MCF 10A (cell line): ENCODE measurements at regions of chr3 and their contacts with region 1.

Region 1: DNA sequence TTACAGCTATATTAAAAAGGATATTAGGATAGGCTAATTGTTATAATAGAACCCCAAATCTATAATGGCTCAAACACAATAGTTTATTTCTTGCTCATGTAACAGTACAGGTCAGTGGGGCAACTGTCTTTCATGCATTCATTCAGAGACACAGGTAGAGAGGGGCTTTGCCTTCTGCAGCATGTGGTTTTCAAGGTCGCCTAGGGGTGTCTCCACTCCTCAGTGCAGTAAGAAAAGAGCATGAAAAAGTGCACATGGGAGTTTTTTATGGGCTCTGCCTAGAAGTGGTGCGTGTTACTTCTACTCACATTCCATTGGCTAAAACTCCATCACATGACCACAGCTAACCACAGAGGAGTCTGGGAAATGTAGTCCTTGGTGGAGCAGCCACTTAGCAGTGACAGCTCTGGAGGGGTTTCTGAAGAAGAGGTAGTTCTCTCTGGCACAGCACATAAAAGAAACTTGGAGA is 1.8 kb downstream of the ZBTB38 start:
- DNase-seq: peak; percentile 93
- H3K4me3 Mint-ChIP-seq: peak overlapping the region; percentile 73
- H3K27ac Mint-ChIP-seq: peak overlapping the region; percentile 98
- H3K4me1 Mint-ChIP-seq: peaks cover 56% of the 10 kb centered on the region
- H3K27me3 Mint-ChIP-seq: no peaks in the 10 kb centered on the region
- CTCF ChIP-seq: no peak

Region 2: DNA sequence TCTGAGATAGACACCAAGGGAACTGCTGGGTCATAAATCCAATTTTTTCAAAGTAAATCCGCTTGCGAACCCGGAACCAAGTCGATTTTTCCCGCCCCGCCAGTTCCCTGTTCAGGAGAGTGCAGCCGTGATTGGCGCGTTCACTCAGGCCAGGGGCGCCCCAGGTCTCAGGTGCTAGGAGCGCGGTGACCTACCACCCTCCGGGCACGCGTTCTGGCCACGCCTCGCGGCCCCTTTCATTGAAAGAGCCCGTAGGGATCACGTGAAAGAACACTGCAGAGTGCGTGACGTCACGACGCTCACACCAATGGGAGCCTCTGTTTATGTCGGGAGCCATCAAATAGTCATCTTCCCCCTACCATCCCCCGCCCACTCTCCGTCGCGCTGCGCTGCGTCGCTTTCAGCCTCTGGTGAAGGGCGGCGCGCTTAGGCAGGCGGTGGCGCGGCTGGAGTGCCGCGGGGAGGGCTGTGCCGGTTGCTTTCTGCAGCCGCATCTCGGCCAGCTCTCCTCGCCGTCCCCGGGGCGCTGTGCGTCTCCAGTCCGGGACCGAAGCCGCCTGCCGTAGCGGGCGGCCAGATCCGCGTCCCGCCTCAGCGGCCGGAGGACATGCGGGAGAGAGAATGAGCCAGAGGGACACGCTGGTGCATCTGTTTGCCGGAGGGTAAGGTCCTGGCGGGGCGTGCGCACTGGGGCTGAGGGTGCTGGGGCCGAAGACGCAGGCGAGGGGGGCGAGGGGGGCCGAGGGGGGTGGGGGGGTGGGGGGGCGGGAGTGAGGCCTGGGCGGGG is 428.5 kb before region 1 on chr3 and contains the start of gene SLC25A36:
- CTCF ChIA-PET with region 1: no interaction called
- POLR2A ChIA-PET with region 1: no interaction called
- intact Hi-C with region 1: loop called (anchors 5 kb)
- DNase-seq: peak; percentile 99
- H3K4me3 Mint-ChIP-seq: peak within 1 kb of the TSS; percentile 95
- H3K27ac Mint-ChIP-seq: peak within 1 kb of the TSS; percentile 89
- H3K4me1 Mint-ChIP-seq: peaks cover 22% of the 10 kb centered on the region
- H3K27me3 Mint-ChIP-seq: no peaks in the 10 kb centered on the region
- CTCF ChIP-seq: no peak
- total RNA-seq, gene SLC25A36: 71.2 and 75.0 TPM in 2 replicates

Region 3: GRCh38 chr3:141386611-141387111 is 16.6 kb after region 1 on chr3:
- CTCF ChIA-PET with region 1: interaction called, 7 read pairs
- POLR2A ChIA-PET with region 1: interaction called, 210 read pairs
- intact Hi-C with region 1: loop called (anchors 2 kb)
- DNase-seq: no peak
- H3K4me3 Mint-ChIP-seq: peak overlapping the region; percentile 28
- H3K27ac Mint-ChIP-seq: peak overlapping the region; percentile 73
- H3K4me1 Mint-ChIP-seq: peaks cover 46% of the 10 kb centered on the region
- H3K27me3 Mint-ChIP-seq: no peaks in the 10 kb centered on the region
- CTCF ChIP-seq: no peak

Region 4: GRCh38 chr3:141402476-141403171 is 32.5 kb after region 1 on chr3:
- CTCF ChIA-PET with region 1: interaction called, 12 read pairs
- POLR2A ChIA-PET with region 1: interaction called, 349 read pairs
- intact Hi-C with region 1: loop called (anchors 1 kb)
- DNase-seq: peak; percentile 60
- H3K4me3 Mint-ChIP-seq: peak overlapping the region; percentile 69
- H3K27ac Mint-ChIP-seq: peak overlapping the region; percentile 94
- H3K4me1 Mint-ChIP-seq: peaks cover 56% of the 10 kb centered on the region
- H3K27me3 Mint-ChIP-seq: no peaks in the 10 kb centered on the region
- CTCF ChIP-seq: no peak

Region 5: GRCh38 chr3:141544697-141545096 is 174.6 kb after region 1 on chr3:
- CTCF ChIA-PET with region 1: no interaction called
- POLR2A ChIA-PET with region 1: no interaction called
- intact Hi-C with region 1: no loop called
- DNase-seq: no peak
- H3K4me3 Mint-ChIP-seq: no peak overlapping the region
- H3K27ac Mint-ChIP-seq: no peak overlapping the region
- H3K4me1 Mint-ChIP-seq: peaks cover 3% of the 10 kb centered on the region
- H3K27me3 Mint-ChIP-seq: no peaks in the 10 kb centered on the region
- CTCF ChIP-seq: no peak